ENCODE measurements at regions of chr14 and their contacts with region 1.

Region 1: GRCh38 chr14:103688906-103689902 is 26.0 kb downstream of the XRCC3 start:
- DNase-seq: no peak
- H3K4me3 ChIP-seq: no peak overlapping the region
- H3K27ac ChIP-seq: no peak overlapping the region
- H3K4me1 ChIP-seq: no peaks in the 10 kb centered on the region
- H3K27me3 ChIP-seq: no peaks in the 10 kb centered on the region
- CTCF ChIP-seq: no peak
- POLR2A ChIP-seq: no peak

Region 2: GRCh38 chr14:103014466-103015319 is 674.5 kb before region 1 on chr14:
- CTCF ChIA-PET with region 1: no interaction called
- POLR2A ChIA-PET with region 1: no interaction called
- dilution Hi-C with region 1: no loop called
- intact Hi-C with region 1: no loop called
- DNase-seq: peak; percentile 36
- H3K4me3 ChIP-seq: peak overlapping the region in 1 of 3 experiments; percentile 15
- H3K27ac ChIP-seq: peak overlapping the region; percentile 61
- H3K4me1 ChIP-seq: peaks cover 36% of the 10 kb centered on the region
- H3K27me3 ChIP-seq: no peaks in the 10 kb centered on the region
- CTCF ChIP-seq: no peak
- POLR2A ChIP-seq: no peak

Region 3: GRCh38 chr14:103705118-103705503 is 15.9 kb after region 1 on chr14:
- CTCF ChIA-PET with region 1: interaction called, 10 read pairs
- POLR2A ChIA-PET with region 1: no interaction called
- dilution Hi-C with region 1: no loop called
- intact Hi-C with region 1: no loop called
- DNase-seq: peak; percentile 86
- H3K4me3 ChIP-seq: no peak overlapping the region
- H3K27ac ChIP-seq: peak overlapping the region; percentile 77
- H3K4me1 ChIP-seq: peaks cover 35% of the 10 kb centered on the region
- H3K27me3 ChIP-seq: no peaks in the 10 kb centered on the region
- CTCF ChIP-seq: no peak
- POLR2A ChIP-seq: no peak

Region 4: DNA sequence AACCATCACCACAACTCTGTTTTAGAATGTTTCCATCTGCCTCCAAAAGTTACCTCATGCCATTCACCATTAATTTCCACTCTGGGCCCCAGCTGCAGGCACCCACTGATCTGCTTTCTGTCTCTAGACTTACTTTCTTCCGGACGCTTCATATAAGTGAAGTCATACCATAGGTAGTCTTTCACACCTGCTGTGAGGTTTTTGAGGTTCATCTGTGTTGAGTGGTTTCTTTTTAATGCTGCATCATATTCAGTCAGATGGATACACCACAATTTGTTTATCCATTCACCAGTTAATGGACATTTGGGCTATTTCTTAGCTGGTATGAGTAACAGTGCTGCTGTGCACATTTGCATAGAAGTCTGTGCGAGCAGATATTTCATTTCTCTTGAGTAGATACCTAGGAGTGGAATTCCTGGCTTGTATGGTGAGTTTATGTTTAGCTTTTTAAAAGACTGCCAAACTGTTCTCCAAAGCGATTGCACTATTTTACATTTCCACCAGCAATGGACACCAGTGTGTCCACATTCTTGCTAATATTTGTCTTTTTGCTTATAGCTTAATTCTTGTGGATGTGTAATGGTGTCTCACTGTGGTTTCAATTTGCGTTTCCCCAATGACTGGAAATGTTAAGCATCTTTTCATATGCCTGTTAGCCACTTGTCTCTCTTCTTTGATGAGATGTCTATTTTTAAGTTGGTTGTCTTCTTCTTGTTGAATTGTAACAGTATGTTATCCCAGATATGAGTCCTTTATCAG is 74.7 kb after region 1 on chr14:
- CTCF ChIA-PET with region 1: no interaction called
- POLR2A ChIA-PET with region 1: no interaction called
- dilution Hi-C with region 1: no loop called
- intact Hi-C with region 1: no loop called
- DNase-seq: no peak
- H3K4me3 ChIP-seq: no peak overlapping the region
- H3K27ac ChIP-seq: no peak overlapping the region
- H3K4me1 ChIP-seq: peaks cover 5% of the 10 kb centered on the region
- H3K27me3 ChIP-seq: no peaks in the 10 kb centered on the region
- CTCF ChIP-seq: no peak
- POLR2A ChIP-seq: no peak